ENCODE measurements at regions of chr17 and their contacts with region 1.

Region 1: DNA sequence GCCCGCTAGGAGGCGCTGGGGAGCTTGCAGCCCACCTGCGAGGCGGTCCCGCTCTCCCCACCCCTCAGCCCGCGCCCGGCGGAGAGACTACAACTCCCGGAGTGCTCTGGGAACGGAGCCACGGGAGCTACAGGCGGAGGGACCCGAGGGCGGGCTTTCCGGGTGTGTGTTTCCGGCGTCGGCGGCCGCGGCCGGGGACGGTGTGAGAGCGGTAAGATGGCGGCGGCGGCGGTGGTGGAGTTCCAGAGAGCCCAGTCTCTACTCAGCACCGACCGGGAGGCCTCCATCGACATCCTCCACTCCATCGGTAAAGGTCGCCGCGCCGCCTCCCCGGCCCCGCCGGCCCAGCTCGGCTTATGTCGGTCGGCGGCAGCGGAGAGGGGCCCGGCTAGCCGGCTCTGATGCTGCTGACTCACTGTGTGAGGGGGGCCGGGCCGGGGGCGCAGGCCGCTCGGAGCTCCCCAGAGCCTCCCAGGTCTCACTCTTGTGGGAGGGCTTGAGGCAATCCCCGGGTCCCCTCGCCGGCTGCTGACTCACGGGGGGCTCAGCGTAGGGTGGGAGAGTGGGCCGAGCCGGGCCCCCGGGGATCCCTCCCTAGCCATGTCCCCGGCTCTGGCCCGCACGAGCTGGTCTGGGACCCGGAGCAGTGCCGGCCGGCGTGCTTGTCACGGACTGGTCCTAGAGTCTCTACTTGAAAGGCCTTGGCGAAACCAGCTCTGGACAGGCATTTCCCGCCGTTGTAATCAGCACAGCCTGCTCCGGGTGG is at the start of gene PSMD11:
- DNase-seq: peak; percentile 99
- H3K4me3 ChIP-seq: peak within 1 kb of the TSS; percentile 93
- H3K4me3 Mint-ChIP-seq: peak within 1 kb of the TSS; percentile 75
- H3K27ac Mint-ChIP-seq: peak within 1 kb of the TSS; percentile 37
- H3K4me1 ChIP-seq: peaks cover 20% of the 10 kb centered on the region
- H3K4me1 Mint-ChIP-seq: peaks cover 22% of the 10 kb centered on the region
- H3K27me3 ChIP-seq: no peaks in the 10 kb centered on the region
- H3K27me3 Mint-ChIP-seq: no peaks in the 10 kb centered on the region
- CTCF ChIP-seq: peak in 1 of 2 experiments; percentile 98
- total RNA-seq, gene PSMD11: 198 and 208 TPM in 2 replicates

Region 2: GRCh38 chr17:32253117-32253611 is 191.3 kb before region 1 on chr17:
- CTCF ChIA-PET with region 1: interaction called, 7 read pairs
- POLR2A ChIA-PET with region 1: no interaction called
- intact Hi-C with region 1: loop called (anchors 5 kb)
- DNase-seq: peak; percentile 80 to 86
- H3K4me3 ChIP-seq: no peak overlapping the region
- H3K4me3 Mint-ChIP-seq: no peak overlapping the region
- H3K27ac Mint-ChIP-seq: no peak overlapping the region
- H3K4me1 ChIP-seq: no peaks in the 10 kb centered on the region
- H3K4me1 Mint-ChIP-seq: no peaks in the 10 kb centered on the region
- H3K27me3 ChIP-seq: no peaks in the 10 kb centered on the region
- H3K27me3 Mint-ChIP-seq: no peaks in the 10 kb centered on the region
- CTCF ChIP-seq: peak; percentile 98 to 99

Region 3: GRCh38 chr17:32319548-32319905 is 125.0 kb before region 1 on chr17:
- CTCF ChIA-PET with region 1: no interaction called
- POLR2A ChIA-PET with region 1: no interaction called
- intact Hi-C with region 1: no loop called
- DNase-seq: peak; percentile 78 to 90
- H3K4me3 ChIP-seq: no peak overlapping the region
- H3K4me3 Mint-ChIP-seq: no peak overlapping the region
- H3K27ac Mint-ChIP-seq: no peak overlapping the region
- H3K4me1 ChIP-seq: no peaks in the 10 kb centered on the region
- H3K4me1 Mint-ChIP-seq: peaks cover 8% of the 10 kb centered on the region
- H3K27me3 ChIP-seq: no peaks in the 10 kb centered on the region
- H3K27me3 Mint-ChIP-seq: peaks cover 2% of the 10 kb centered on the region
- CTCF ChIP-seq: peak; percentile 98 to 99

Region 4: GRCh38 chr17:32349854-32350665 is 94.4 kb before region 1 on chr17 and contains the start of gene ZNF207:
- CTCF ChIA-PET with region 1: interaction called, 5 read pairs
- POLR2A ChIA-PET with region 1: no interaction called
- intact Hi-C with region 1: loop called (anchors 5 kb)
- DNase-seq: peak; percentile 96 to 97
- H3K4me3 ChIP-seq: peak within 1 kb of the TSS; percentile 75
- H3K4me3 Mint-ChIP-seq: peak within 1 kb of the TSS; percentile 90
- H3K27ac Mint-ChIP-seq: peak within 1 kb of the TSS; percentile 99
- H3K4me1 ChIP-seq: peaks cover 26% of the 10 kb centered on the region
- H3K4me1 Mint-ChIP-seq: peaks cover 1% of the 10 kb centered on the region
- H3K27me3 ChIP-seq: no peaks in the 10 kb centered on the region
- H3K27me3 Mint-ChIP-seq: no peaks in the 10 kb centered on the region
- CTCF ChIP-seq: no peak
- total RNA-seq, gene ZNF207: 211 and 213 TPM in 2 replicates

Region 5: GRCh38 chr17:32396343-32396742 is 48.1 kb before region 1 on chr17:
- CTCF ChIA-PET with region 1: interaction called, 14 read pairs
- POLR2A ChIA-PET with region 1: interaction called, 18 read pairs
- intact Hi-C with region 1: loop called (anchors 5 kb)
- DNase-seq: peak; percentile 55 to 73
- H3K4me3 ChIP-seq: no peak overlapping the region
- H3K4me3 Mint-ChIP-seq: peak overlapping the region; percentile 17
- H3K27ac Mint-ChIP-seq: peak overlapping the region; percentile 53
- H3K4me1 ChIP-seq: peaks cover 5% of the 10 kb centered on the region
- H3K4me1 Mint-ChIP-seq: peaks cover 15% of the 10 kb centered on the region
- H3K27me3 ChIP-seq: no peaks in the 10 kb centered on the region
- H3K27me3 Mint-ChIP-seq: no peaks in the 10 kb centered on the region
- CTCF ChIP-seq: no peak

Region 6: DNA sequence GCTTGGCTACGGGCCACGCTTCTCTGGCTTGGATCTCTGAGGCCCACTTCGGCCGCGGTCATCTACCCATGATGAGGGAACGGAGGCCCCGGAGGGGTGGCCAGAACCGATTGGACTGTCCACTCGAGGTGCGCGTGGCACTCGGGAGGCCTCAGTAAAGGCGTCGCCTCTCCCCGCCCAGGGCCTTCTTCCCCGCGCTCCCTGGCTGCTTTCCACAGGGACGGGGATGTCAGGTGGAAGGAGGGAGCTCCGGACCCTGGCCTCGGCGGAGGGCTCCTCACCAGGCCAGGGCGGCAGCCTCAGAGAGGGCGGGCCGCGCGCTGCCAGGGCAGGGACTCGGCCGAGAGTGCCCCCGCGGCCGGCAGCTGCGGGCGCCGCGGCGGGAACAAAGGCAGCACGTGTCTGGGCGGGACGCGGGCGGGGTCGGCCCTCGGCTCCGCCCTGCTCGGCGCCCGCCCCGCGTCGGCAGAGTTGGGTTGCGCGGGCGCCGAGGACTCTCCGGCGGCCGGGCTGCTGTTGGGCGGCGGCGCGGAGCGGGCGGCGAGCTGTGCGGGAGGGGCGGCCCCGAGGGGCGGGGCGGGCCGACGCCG is 41.7 kb after region 1 on chr17:
- CTCF ChIA-PET with region 1: interaction called, 8 read pairs
- POLR2A ChIA-PET with region 1: interaction called, 10 read pairs
- intact Hi-C with region 1: no loop called
- DNase-seq: peak; percentile 78 to 88
- H3K4me3 ChIP-seq: peak overlapping the region; percentile 77
- H3K4me3 Mint-ChIP-seq: peak overlapping the region; percentile 88
- H3K27ac Mint-ChIP-seq: peak overlapping the region; percentile 89
- H3K4me1 ChIP-seq: peaks cover 18% of the 10 kb centered on the region
- H3K4me1 Mint-ChIP-seq: peaks cover 24% of the 10 kb centered on the region
- H3K27me3 ChIP-seq: no peaks in the 10 kb centered on the region
- H3K27me3 Mint-ChIP-seq: no peaks in the 10 kb centered on the region
- CTCF ChIP-seq: no peak

Region 7: GRCh38 chr17:32514606-32515005 is 70.1 kb after region 1 on chr17:
- CTCF ChIA-PET with region 1: no interaction called
- POLR2A ChIA-PET with region 1: no interaction called
- intact Hi-C with region 1: no loop called
- DNase-seq: no peak
- H3K4me3 ChIP-seq: no peak overlapping the region
- H3K4me3 Mint-ChIP-seq: no peak overlapping the region
- H3K27ac Mint-ChIP-seq: no peak overlapping the region
- H3K4me1 ChIP-seq: no peaks in the 10 kb centered on the region
- H3K4me1 Mint-ChIP-seq: no peaks in the 10 kb centered on the region
- H3K27me3 ChIP-seq: no peaks in the 10 kb centered on the region
- H3K27me3 Mint-ChIP-seq: no peaks in the 10 kb centered on the region
- CTCF ChIP-seq: no peak

Measured in Caco-2 (cell line).